ENCODE measurements at regions of chrX and their contacts with region 1.

Region 1: DNA sequence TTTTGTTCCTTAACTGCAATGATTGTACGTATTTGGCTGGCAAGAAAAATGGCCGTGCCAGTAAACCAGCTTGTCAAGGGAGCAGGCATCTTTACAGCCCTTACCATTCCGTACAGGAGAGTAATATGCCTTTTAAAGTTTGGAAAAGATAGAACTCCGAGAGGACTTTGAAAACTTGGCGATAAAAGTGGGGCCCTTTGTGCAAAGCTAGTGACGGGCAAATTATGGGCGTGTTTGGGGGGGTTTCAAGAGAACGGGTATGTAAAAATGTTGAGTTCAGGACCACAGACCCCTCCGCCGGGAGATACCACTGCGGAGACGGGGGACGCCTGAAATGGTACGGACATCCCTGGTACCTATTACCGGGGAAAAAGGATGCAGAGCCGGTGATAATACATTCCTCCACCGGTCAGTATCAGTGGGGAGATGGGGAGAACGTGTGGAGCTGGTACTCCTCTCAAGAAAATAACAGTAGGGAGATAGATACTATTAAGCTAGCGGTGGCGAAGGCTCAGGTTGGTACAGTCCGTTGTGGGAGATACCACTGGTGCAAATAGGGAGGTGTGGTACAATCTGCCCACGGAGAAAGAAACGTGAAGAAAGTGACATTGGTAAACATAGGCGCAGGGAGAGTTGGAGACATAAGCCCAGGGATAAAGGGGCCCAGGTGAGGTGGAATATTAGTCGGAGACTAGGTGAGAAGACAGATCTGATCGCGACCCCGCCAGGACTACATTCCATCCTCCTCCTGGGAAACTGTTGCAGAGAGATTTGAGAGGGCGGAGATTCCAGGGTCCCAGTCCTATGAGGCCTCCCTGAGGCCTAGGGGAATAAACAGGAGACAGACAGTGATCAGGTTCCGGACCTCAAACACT is 14.5 kb downstream of the SPACA5 start:
- DNase-seq: peak; percentile 63 to 73
- H3K4me3 ChIP-seq: peak overlapping the region in 2 of 3 donors; percentile 22 to 44
- H3K27ac ChIP-seq: peak overlapping the region; percentile 81 to 92 (median 91)
- H3K4me1 ChIP-seq: no peaks in the 10 kb centered on the region
- H3K27me3 ChIP-seq: no peaks in the 10 kb centered on the region
- CTCF ChIP-seq: no peak
- POLR2A ChIP-seq: no peak

Region 2: DNA sequence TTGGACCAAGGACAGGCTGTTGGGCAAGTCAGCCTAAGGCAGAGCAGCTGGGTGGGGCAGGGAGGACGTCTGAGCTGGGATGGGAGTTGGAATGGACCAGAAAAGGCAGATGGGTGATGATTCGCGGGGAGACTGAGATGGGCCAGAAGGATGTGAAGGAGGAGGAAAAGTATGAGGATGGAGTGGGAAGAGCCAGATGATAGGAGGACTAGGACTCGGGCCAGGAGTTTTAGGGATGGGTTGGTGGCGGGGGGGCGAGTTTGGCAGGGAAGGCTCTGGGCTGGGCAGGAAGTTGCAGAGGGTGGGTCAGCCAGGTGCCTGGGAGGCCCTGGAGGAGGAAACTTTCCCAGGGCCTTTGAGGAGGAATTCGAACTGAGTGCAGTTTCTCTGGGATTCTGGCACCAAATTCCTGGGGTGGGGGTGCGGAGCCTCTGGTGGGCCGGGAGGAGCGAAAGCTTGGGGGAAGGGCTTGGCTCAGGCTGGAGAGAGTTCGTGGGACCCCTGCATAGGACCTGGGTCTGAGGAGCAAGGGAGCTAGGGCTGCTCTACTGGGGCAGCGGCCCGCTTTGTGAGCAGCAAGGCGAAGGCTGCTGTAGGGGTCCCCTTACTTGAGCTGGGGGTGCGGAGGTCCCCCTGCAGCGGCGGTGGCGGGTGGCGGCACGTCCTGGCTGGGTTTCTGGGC is 447.7 kb before region 1 on chrX:
- intact Hi-C with region 1: no loop called
- DNase-seq: no peak
- H3K4me3 ChIP-seq: no peak overlapping the region
- H3K27ac ChIP-seq: peak overlapping the region in 1 of 3 donors; percentile 36
- H3K4me1 ChIP-seq: peaks cover 0 to 13% of the 10 kb centered on the region in 2 donors
- H3K27me3 ChIP-seq: no peaks in the 10 kb centered on the region
- CTCF ChIP-seq: no peak
- POLR2A ChIP-seq: no peak

Region 3: DNA sequence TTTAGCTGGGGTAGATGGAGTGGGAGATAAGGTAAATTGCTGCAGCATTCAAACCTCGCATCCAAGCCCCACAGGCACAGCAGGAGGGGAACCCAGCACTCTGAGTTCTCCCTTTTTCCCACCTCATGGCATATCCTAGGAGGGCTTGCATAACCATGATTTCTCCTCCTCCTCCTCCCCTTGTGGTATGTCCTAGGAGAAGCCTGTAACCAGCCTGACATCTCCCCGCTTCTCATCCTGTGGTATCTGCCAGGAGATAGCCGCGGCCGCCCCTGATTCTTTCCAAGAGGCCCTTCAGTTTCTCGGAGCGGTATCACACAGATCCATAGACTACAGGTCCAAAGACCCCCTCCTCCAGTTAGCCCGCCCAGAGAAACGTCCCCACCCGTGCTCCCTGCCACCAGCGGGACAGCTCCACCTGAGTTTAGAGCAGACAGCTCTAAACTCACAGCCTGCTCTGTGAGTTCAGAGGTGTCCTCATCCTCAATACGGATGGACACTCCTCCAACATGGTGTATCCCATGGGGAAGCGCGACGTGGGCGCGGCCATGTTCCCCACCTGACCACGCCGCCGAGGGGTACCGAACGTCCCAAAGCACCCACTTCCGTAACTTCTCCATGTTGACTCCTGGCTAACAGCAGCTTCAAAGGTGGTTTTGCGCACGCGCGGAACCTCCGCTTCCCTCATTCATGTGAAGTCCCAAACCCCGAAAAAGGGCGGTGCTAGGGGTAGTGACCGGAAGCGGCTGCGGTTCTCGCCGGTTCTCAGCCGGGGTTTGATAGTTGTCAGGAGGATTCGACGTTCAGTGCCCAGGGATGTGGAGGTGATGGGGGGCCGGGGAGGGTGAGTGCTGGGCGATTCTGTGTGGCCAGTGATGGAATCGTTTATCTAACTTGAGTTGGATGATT is 184.8 kb before region 1 on chrX and contains the start of gene ZNF81:
- intact Hi-C with region 1: loop called (anchors 10 kb)
- DNase-seq: peak; percentile 97
- H3K4me3 ChIP-seq: peak within 1 kb of the TSS in 2 of 3 donors; percentile 21 to 42
- H3K27ac ChIP-seq: peak within 1 kb of the TSS in 2 of 3 donors; percentile 32 to 60
- H3K4me1 ChIP-seq: no peaks in the 10 kb centered on the region
- H3K27me3 ChIP-seq: no peaks in the 10 kb centered on the region
- CTCF ChIP-seq: no peak
- POLR2A ChIP-seq: peak in 1 of 2 donors; percentile 64
- total RNA-seq, gene ZNF81: 7.1 to 17.8 (median 12.2) TPM

Region 4: GRCh38 chrX:47976254-47977151 is 44.8 kb before region 1 on chrX:
- intact Hi-C with region 1: loop called (anchors 5 kb)
- DNase-seq: no peak
- H3K4me3 ChIP-seq: no peak overlapping the region
- H3K27ac ChIP-seq: no peak overlapping the region
- H3K4me1 ChIP-seq: no peaks in the 10 kb centered on the region
- H3K27me3 ChIP-seq: no peaks in the 10 kb centered on the region
- CTCF ChIP-seq: no peak
- POLR2A ChIP-seq: no peak

Measured in thyroid gland (tissue), 4 donors.